ENCODE measurements at regions of chr2 and their contacts with region 1.

Region 1: GRCh38 chr2:222561817-222562645 is 93.9 kb downstream of the FARSB start:
- DNase-seq: peak; percentile 29 to 70
- H3K4me3 ChIP-seq: no peak overlapping the region
- H3K27ac ChIP-seq: no peak overlapping the region
- H3K4me1 ChIP-seq: no peaks in the 10 kb centered on the region
- H3K27me3 ChIP-seq: no peaks in the 10 kb centered on the region; a peak in 1 of 7 replicates
- CTCF ChIP-seq: peak; percentile 37 to 78 (median 78)
- EP300 ChIP-seq: no peak
- POLR2A ChIP-seq: no peak
- RAD21 ChIP-seq: peak; percentile 92 to 96

Region 2: GRCh38 chr2:222038067-222038802 is 523.8 kb before region 1 on chr2:
- CTCF ChIA-PET with region 1: interaction called, 11 read pairs
- POLR2A ChIA-PET with region 1: no interaction called
- DNase-seq: no peak
- H3K4me3 ChIP-seq: no peak overlapping the region
- H3K27ac ChIP-seq: no peak overlapping the region
- H3K4me1 ChIP-seq: no peaks in the 10 kb centered on the region
- H3K27me3 ChIP-seq: peaks cover 0 to 4% (median 1%) of the 10 kb centered on the region in 4 experiments; a peak in 3 of 7 replicates
- CTCF ChIP-seq: peak in 2 of 3 experiments; percentile 24 to 41; a peak in 2 of 4 replicates
- EP300 ChIP-seq: no peak
- POLR2A ChIP-seq: no peak
- RAD21 ChIP-seq: peak; percentile 59 to 61

Region 3: GRCh38 chr2:222071911-222072310 is 490.1 kb before region 1 on chr2:
- CTCF ChIA-PET with region 1: no interaction called
- POLR2A ChIA-PET with region 1: no interaction called
- DNase-seq: no peak
- H3K4me3 ChIP-seq: no peak overlapping the region
- H3K27ac ChIP-seq: no peak overlapping the region
- H3K4me1 ChIP-seq: peaks cover 0 to 6% (median 1%) of the 10 kb centered on the region in 4 experiments; a peak in 4 of 7 replicates
- H3K27me3 ChIP-seq: peaks cover 0 to 2% (median 0%) of the 10 kb centered on the region in 4 experiments; a peak in 1 of 7 replicates
- CTCF ChIP-seq: no peak
- EP300 ChIP-seq: no peak
- POLR2A ChIP-seq: no peak
- RAD21 ChIP-seq: no peak

Region 4: GRCh38 chr2:222318026-222318711 is 243.9 kb before region 1 on chr2:
- CTCF ChIA-PET with region 1: interaction called, 20 read pairs
- POLR2A ChIA-PET with region 1: no interaction called
- DNase-seq: peak in 1 of 2 experiments; percentile 89
- H3K4me3 ChIP-seq: peak overlapping the region; percentile 41 to 62 (median 52); a peak in 7 of 8 replicates
- H3K27ac ChIP-seq: no peak overlapping the region
- H3K4me1 ChIP-seq: peaks cover 0 to 9% (median under 1%) of the 10 kb centered on the region in 4 experiments; a peak in 5 of 7 replicates
- H3K27me3 ChIP-seq: peaks cover 66 to 91% (median 79%) of the 10 kb centered on the region in 4 experiments
- CTCF ChIP-seq: peak in 2 of 3 experiments; percentile 17 to 33; a peak in 2 of 4 replicates
- EP300 ChIP-seq: no peak
- POLR2A ChIP-seq: no peak
- RAD21 ChIP-seq: peak; percentile 51 to 59

Region 5: DNA sequence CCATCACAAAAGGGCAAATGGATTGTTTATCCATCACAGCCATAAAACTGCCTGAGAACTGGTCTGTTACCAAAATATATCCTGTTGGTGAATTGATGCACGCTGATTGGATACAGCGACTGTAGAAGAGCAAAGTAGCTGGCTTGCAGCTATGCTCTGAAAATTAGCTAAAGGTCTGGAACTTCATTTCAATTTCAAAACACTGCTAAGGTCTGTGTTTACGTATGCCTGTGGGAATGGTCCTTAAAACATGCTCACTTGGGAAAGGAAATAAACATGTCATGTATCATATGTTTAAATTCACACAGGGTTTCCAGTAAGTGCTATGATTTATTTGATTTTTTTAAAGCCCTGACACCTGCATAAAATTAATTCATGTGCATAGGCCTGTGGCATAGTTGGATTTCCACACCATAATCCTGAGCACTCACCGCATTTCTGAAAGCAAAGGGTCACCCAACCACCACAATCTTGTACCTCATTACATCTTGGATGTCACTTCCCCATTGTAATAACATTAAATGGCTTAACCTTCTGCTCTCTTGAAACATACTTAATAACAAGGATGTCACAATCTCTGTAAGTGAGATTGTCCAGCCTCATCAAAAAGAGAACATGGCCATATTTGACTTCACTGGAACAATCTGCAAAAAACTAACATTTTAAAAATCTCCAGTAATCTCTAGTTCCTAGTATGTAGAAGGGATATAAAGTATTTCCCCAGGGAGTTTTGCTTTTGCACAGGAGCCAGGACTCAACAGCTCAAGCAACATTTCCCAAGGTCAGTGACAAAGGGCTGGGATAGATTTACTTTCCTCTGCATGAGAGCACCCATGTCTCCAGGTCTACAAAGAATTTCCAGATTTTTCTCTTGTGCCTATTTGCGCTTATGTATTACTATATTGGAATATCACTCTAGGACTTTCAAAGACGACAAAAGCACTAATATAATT is 15.9 kb before region 1 on chr2:
- CTCF ChIA-PET with region 1: interaction called, 10 read pairs
- POLR2A ChIA-PET with region 1: no interaction called
- DNase-seq: no peak
- H3K4me3 ChIP-seq: no peak overlapping the region
- H3K27ac ChIP-seq: no peak overlapping the region
- H3K4me1 ChIP-seq: peaks cover 0 to 7% (median 3%) of the 10 kb centered on the region in 4 experiments; a peak in 3 of 7 replicates
- H3K27me3 ChIP-seq: no peaks in the 10 kb centered on the region
- CTCF ChIP-seq: no peak
- EP300 ChIP-seq: no peak
- POLR2A ChIP-seq: no peak
- RAD21 ChIP-seq: no peak

Region 6: DNA sequence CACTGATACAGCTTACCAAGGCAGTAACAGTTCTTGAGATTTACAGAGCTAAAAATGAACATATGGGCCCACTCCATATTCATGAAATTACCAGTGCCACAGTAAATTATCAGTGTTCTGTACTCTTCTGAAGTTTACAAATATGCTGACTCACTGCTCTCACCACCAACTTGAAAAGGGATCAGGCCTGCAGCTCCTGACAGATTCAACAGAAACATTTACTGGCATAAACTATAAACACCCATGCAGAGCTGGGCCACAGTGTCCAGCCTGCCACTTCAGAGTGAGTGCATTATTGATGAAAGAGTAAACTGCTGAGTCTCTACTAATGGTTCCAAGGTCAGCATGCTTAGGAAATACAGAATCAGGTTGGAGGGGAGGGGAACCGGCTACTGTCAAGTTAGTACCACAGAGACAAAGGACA is 10.7 kb after region 1 on chr2:
- CTCF ChIA-PET with region 1: interaction called, 22 read pairs
- POLR2A ChIA-PET with region 1: interaction called, 3 read pairs
- DNase-seq: no peak
- H3K4me3 ChIP-seq: no peak overlapping the region
- H3K27ac ChIP-seq: no peak overlapping the region
- H3K4me1 ChIP-seq: no peaks in the 10 kb centered on the region; a peak in 1 of 7 replicates
- H3K27me3 ChIP-seq: peaks cover 0 to 1% (median 0%) of the 10 kb centered on the region in 4 experiments; a peak in 1 of 7 replicates
- CTCF ChIP-seq: no peak
- EP300 ChIP-seq: no peak
- POLR2A ChIP-seq: no peak
- RAD21 ChIP-seq: no peak

Measured in H1 (cell line).